Activated CD4-positive, alpha-beta memory T cell treated with anti-CD3 and anti-CD28 coated beads for 36 hours (primary cell): ENCODE measurements at regions of chr2 and their contacts with region 1.

Region 1: DNA sequence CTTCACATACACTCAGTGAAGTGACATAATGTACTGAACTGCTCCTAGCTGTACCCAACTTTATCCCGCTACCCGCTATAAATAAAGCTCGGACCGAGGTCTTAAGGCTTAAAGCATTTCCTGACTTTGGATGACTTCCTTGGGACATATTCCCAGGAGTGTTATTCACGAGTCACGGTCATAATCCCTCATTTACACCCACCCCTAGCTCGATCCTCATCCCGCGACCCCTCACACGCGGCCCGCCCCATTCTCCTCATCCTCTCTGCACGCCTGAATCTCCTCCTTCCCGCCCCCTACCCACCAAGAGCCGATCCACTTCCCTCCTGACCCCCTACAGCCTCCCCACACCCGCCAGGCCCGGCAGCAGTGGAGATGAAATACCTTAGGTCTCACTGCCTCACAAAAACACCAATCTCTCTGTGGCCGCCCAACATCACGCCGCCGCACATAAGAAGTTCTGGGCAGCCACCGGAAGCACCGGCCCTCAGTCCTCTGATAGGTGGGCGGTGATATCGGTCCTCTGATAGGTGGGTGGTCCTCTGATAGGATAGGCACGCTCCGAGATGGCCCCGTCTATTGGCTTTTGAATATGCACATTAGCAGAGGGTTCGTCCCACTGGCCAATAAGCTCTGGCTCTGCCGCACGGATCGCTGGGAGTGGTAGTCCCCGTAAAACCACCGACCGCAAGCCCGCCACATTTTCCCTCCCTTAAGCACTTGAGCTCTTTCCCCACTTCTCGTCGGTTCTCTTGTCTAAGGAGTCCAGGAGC is at the start of gene WDCP:
- DNase-seq: peak; percentile 97
- H3K4me3 Mint-ChIP-seq: peak within 1 kb of the TSS; percentile 95
- H3K27ac Mint-ChIP-seq: peak within 1 kb of the TSS; percentile 74
- H3K4me1 Mint-ChIP-seq: peaks cover 21% of the 10 kb centered on the region
- H3K27me3 Mint-ChIP-seq: peaks cover 3% of the 10 kb centered on the region
- total RNA-seq, gene WDCP: 18.4 to 21.2 TPM

Region 2: DNA sequence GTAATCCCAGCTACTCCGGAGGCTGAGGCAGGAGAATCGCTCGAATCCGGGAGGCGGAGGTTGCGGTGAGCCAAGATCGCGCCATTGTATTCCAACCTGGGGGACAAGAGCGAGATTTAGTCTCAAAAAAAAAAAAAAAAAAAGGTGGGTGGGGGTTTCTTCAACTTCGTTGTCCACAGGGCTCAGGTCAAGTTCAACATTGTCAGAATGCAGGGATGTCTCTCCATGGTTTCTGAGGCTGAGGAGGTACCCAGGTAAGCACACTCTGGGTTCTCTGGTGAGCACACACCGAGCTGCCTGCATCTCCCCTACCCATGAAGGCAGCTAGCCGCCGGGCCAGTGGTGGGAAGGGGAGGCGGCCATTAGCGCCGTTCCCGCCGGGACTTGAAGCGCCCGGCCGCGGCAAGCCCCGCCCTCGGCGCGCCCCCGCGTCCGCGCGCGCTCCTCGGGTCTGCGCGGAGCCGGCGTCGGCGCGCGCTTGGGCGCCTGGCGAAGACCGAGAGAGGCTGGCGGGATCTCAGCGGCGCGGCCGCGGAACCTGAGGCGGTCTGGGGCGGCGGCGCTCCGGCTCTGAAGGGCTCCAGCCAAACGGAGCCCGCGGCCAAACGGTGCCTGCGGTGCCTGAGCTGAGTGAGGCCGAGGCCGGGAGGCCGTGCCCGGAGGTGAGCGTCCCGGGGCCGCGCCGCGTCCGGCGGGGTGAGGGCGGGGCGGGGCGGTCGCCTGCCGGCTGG is 107.0 kb before region 1 on chr2 and contains the start of gene UBXN2A:
- CTCF ChIA-PET with region 1: no interaction called
- POLR2A ChIA-PET with region 1: interaction called, 15 read pairs
- intact Hi-C with region 1: loop called (anchors 2 kb)
- DNase-seq: peak; percentile 79
- H3K4me3 Mint-ChIP-seq: peak within 1 kb of the TSS; percentile 86
- H3K27ac Mint-ChIP-seq: peak within 1 kb of the TSS; percentile 82
- H3K4me1 Mint-ChIP-seq: peaks cover 20% of the 10 kb centered on the region
- H3K27me3 Mint-ChIP-seq: peaks cover 5% of the 10 kb centered on the region
- total RNA-seq, gene UBXN2A: 11.8 to 12.2 TPM

Region 3: GRCh38 chr2:24058564-24059271 is 11.6 kb after region 1 on chr2:
- CTCF ChIA-PET with region 1: interaction called, 3 read pairs
- POLR2A ChIA-PET with region 1: interaction called, 3 read pairs
- intact Hi-C with region 1: loop called (anchors 1 kb)
- DNase-seq: no peak
- H3K4me3 Mint-ChIP-seq: no peak overlapping the region
- H3K27ac Mint-ChIP-seq: no peak overlapping the region
- H3K4me1 Mint-ChIP-seq: peaks cover 7% of the 10 kb centered on the region
- H3K27me3 Mint-ChIP-seq: no peaks in the 10 kb centered on the region

Region 4: DNA sequence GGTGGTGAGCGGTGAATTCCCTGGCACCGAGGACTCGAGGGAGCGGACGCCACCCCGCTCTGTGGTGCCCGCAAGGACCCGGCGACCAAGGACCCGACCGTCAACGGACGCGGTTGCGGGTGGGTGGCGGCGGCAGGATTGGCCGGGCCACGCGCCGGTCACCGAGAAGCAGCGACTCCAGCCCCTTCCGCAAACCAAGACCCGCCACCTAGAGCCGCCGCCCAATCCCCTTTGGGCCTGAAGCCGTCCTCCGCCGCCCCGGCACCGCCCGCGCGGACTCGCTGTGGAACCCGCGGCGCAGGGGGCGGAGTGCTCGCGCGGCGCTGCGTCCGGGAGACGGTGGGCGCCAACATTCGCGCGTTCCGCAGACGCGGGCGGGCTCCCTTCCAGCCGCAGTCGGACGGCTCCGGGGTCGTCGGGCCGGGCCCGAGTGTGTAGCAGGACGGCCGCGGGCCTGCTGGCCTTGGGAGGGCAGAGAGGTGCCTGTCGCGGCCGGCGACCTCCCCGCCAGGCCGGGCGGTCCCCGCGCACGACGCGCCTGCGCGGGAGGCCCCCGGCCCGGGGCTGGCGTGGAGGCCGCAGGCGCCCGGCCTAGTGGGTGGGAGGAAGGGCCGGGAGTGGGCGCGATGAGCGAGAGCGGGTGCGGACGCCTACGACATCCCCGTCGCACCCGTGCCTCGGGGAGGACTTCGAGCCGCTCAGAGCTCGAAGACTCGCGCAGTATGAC is 76.2 kb after region 1 on chr2 and contains the starts of genes FAM228B and PFN4:
- CTCF ChIA-PET with region 1: no interaction called
- POLR2A ChIA-PET with region 1: interaction called, 3 read pairs
- intact Hi-C with region 1: loop called (anchors 2 kb)
- DNase-seq: peak; percentile 82
- H3K4me3 Mint-ChIP-seq: peak within 1 kb of the TSS; percentile 72
- H3K27ac Mint-ChIP-seq: no peak within 1 kb of the TSS
- H3K4me1 Mint-ChIP-seq: peaks cover 10% of the 10 kb centered on the region
- H3K27me3 Mint-ChIP-seq: no peaks in the 10 kb centered on the region
- total RNA-seq, gene FAM228B: 6.5 to 7.2 TPM
- total RNA-seq, gene PFN4: 0.40 TPM in 1 of 2 experiments, not detected in the other